ENCODE measurements at regions of chr3 and their contacts with region 1.

Region 1: DNA sequence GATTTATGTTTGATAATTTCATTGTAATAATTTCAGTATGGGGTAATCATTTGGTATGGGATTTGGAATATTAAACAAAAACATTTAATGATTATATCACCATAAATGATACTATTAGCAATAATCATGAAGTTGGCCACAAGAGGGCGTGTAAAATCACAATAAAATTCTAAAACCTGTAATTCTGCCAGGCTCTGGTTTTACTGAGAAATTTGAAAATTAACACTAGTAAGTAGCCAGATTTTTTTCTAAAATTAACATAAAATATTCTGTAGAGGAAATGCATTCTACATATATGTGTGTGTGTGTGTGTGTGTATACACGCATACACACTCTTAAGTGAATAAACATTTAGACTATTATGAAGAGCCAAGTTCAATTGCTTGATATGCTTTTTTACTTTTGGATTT is 40.5 kb downstream of the FEZF2 start:
- H3K4me3 ChIP-seq: no peak overlapping the region
- H3K27ac ChIP-seq: no peak overlapping the region
- H3K4me1 ChIP-seq: no peaks in the 10 kb centered on the region
- CTCF ChIP-seq: no peak

Region 2: DNA sequence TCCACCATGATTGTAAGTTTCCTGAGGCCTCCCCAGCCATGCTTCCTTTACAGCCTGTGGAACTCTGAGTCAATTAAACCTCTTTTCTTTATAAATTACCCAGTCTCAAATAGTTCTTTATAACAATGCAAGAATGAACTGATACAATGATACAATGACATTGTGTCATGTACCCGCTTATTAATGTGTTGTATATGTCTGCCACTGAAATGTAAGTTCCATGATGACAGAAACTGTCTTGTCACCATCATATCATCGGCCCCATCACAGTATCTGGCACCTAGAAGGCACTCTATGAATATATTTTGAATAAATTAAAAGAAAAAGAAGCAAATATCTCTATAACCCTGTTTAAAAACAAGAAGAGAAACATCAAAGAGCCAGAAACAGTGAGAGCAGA is 10.9 kb after region 1 on chr3:
- CTCF ChIA-PET with region 1: no interaction called
- POLR2A ChIA-PET with region 1: interaction called, 10 read pairs
- H3K4me3 ChIP-seq: no peak overlapping the region
- H3K27ac ChIP-seq: no peak overlapping the region
- H3K4me1 ChIP-seq: no peaks in the 10 kb centered on the region
- CTCF ChIP-seq: no peak

Region 3: DNA sequence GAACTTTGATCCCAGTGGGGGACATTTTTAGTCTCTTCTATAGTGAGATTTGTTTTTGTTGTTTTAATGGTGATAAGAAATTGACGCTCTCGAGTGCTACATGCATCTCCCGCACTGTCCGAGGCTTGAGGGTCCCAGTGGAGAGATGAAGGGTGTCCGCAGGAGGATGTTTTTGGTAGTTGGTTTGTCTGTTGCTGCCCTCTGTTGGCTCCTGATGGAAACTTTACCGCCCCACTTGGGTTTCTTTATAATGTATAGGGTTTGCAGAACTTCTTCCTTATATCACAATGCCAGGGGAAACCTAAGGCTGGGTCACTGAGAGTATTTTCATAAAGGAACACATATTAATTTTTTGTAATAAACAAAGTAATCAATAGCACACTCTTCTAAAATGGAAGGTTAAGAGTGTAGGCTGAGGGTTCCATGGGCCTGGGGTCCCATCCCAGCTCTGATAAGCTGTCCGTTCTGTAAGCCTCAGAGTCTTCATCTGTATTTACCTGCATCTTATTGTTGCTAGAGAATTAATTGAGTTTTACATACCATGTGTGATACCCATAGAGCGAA is 225.8 kb after region 1 on chr3:
- CTCF ChIA-PET with region 1: interaction called, 27 read pairs
- POLR2A ChIA-PET with region 1: no interaction called
- H3K4me3 ChIP-seq: no peak overlapping the region
- H3K27ac ChIP-seq: no peak overlapping the region
- H3K4me1 ChIP-seq: no peaks in the 10 kb centered on the region
- CTCF ChIP-seq: 0 out of 2 replicates have a peak, but pooled peaks have one; percentile 34